ENCODE measurements at regions of chr1 and their contacts with region 1.

Region 1: GRCh38 chr1:234212764-234213657 is 160.2 kb upstream of the COA6 start:
- DNase-seq: peak; percentile 64
- ATAC-seq: peak; percentile 64
- H3K4me3 Mint-ChIP-seq: peak overlapping the region; percentile 82
- H3K27ac Mint-ChIP-seq: peak overlapping the region; percentile 82
- H3K4me1 Mint-ChIP-seq: peaks cover 48% of the 10 kb centered on the region
- H3K27me3 Mint-ChIP-seq: peaks cover 10% of the 10 kb centered on the region

Region 2: GRCh38 chr1:234047123-234047522 is 165.9 kb before region 1 on chr1:
- CTCF ChIA-PET with region 1: no interaction called
- POLR2A ChIA-PET with region 1: no interaction called
- DNase-seq: no peak
- ATAC-seq: no peak
- H3K4me3 Mint-ChIP-seq: no peak overlapping the region
- H3K27ac Mint-ChIP-seq: no peak overlapping the region
- H3K4me1 Mint-ChIP-seq: no peaks in the 10 kb centered on the region
- H3K27me3 Mint-ChIP-seq: peaks cover 6% of the 10 kb centered on the region

Region 3: GRCh38 chr1:234188454-234188792 is 24.6 kb before region 1 on chr1:
- CTCF ChIA-PET with region 1: interaction called, 13 read pairs
- POLR2A ChIA-PET with region 1: no interaction called
- DNase-seq: peak; percentile 41
- ATAC-seq: no peak
- H3K4me3 Mint-ChIP-seq: no peak overlapping the region
- H3K27ac Mint-ChIP-seq: no peak overlapping the region
- H3K4me1 Mint-ChIP-seq: peaks cover 5% of the 10 kb centered on the region
- H3K27me3 Mint-ChIP-seq: peaks cover 54% of the 10 kb centered on the region

Region 4: GRCh38 chr1:234230414-234230862 is 17.4 kb after region 1 on chr1:
- CTCF ChIA-PET with region 1: interaction called, 21 read pairs
- POLR2A ChIA-PET with region 1: no interaction called
- DNase-seq: peak; percentile 71
- ATAC-seq: peak; percentile 94
- H3K4me3 Mint-ChIP-seq: peak overlapping the region; percentile 52
- H3K27ac Mint-ChIP-seq: peak overlapping the region; percentile 72
- H3K4me1 Mint-ChIP-seq: peaks cover 65% of the 10 kb centered on the region
- H3K27me3 Mint-ChIP-seq: peaks cover 11% of the 10 kb centered on the region

Region 5: DNA sequence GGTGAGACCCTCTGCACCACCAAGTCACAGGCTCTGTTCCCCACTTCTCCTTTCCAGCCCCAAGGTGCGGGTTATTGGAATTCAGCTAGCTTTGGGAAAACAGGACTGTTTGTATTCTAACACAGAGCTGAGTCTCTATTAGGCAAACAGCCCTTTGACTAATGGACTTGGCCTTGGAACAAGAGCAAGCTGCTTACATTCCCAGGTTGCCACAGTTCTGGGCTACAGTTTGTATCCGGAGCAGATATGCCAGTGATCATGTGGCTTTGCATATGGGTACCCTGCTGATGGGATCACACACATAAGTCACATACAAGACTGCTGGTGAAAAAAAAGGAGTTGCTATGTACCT is 49.7 kb after region 1 on chr1:
- CTCF ChIA-PET with region 1: interaction called, 14 read pairs
- POLR2A ChIA-PET with region 1: no interaction called
- DNase-seq: no peak
- ATAC-seq: no peak
- H3K4me3 Mint-ChIP-seq: no peak overlapping the region
- H3K27ac Mint-ChIP-seq: no peak overlapping the region
- H3K4me1 Mint-ChIP-seq: peaks cover 14% of the 10 kb centered on the region
- H3K27me3 Mint-ChIP-seq: peaks cover 2% of the 10 kb centered on the region